Body of pancreas (tissue), 4 donors: ENCODE measurements at regions of chr2 and their contacts with region 1.

Region 1: GRCh38 chr2:25521665-25522387 is 151.6 kb downstream of the DTNB start:
- DNase-seq: peak; percentile 19 to 67 (median 28)
- ATAC-seq: peak; percentile 81
- H3K4me3 ChIP-seq: no peak overlapping the region
- H3K27ac ChIP-seq: no peak overlapping the region
- H3K4me1 ChIP-seq: peaks cover 8% of the 10 kb centered on the region
- H3K27me3 ChIP-seq: no peaks in the 10 kb centered on the region
- CTCF ChIP-seq: peak; percentile 52 to 97 (median 91)
- POLR2A ChIP-seq: no peak

Region 2: DNA sequence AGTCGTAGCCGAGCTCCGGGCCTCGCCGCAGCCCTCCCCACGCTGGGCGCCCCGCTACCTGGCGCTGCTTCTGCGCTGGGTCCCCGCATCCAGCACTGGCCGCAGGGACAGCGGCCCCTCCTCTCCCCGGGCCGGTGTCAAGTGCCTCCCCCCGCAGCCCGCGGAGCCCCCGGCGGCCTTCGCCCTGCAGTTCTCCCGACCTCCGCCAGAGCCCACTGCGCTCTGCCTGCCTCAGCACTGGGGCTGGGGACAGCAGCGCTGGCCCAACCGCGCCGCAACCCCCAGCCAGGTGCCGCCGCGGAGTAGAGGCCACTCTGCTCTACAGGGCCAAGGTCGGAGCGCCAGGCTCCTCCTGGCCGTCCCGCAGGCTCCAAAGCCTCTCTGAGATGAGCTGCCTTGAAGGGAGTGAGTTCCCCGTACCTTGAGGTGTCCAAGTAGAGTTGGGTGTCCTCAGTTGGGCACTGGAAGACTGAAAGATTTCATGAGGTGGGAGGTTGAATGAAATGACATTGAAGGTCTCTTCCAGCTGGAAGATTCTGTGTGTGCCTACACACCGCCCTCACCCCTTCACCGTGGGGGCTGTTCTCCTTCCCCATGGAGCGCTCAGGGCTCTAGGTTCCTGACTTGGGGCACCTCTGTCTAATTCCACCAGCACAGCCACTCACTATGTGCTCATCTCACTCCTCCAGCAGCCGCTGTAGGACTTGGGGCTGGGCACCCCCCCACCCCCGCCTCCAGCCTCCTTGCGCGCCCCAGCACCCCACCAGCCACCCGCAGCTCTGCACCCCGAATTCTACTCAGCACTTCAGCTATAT is 179.2 kb before region 1 on chr2:
- intact Hi-C with region 1: loop called (anchors 10 kb)
- DNase-seq: peak; percentile 84 to 89 (median 86)
- ATAC-seq: peak; percentile 85
- H3K4me3 ChIP-seq: peak overlapping the region in 1 of 2 donors; percentile 74
- H3K27ac ChIP-seq: peak overlapping the region; percentile 62 to 86 (median 73)
- H3K4me1 ChIP-seq: peaks cover 26% of the 10 kb centered on the region
- H3K27me3 ChIP-seq: no peaks in the 10 kb centered on the region
- CTCF ChIP-seq: peak; percentile 97 to 99 (median 99)
- POLR2A ChIP-seq: peak in 2 of 3 donors; percentile 36 to 42